Left lung (tissue), 14 donors: ENCODE measurements at regions of chr11 and their contacts with region 1.

Region 1: GRCh38 chr11:128039140-128040021 is 548.0 kb downstream of the ETS1 start:
- DNase-seq: peak in 2 of 4 donors; percentile 76 to 82
- ATAC-seq: peak; percentile 89
- H3K4me3 ChIP-seq: no peak overlapping the region
- H3K27ac ChIP-seq: peak overlapping the region in 1 of 2 donors; percentile 78
- H3K4me1 ChIP-seq: peaks cover 4 to 34% of the 10 kb centered on the region in 2 donors
- H3K27me3 ChIP-seq: no peaks in the 10 kb centered on the region
- CTCF ChIP-seq: no peak

Region 2: DNA sequence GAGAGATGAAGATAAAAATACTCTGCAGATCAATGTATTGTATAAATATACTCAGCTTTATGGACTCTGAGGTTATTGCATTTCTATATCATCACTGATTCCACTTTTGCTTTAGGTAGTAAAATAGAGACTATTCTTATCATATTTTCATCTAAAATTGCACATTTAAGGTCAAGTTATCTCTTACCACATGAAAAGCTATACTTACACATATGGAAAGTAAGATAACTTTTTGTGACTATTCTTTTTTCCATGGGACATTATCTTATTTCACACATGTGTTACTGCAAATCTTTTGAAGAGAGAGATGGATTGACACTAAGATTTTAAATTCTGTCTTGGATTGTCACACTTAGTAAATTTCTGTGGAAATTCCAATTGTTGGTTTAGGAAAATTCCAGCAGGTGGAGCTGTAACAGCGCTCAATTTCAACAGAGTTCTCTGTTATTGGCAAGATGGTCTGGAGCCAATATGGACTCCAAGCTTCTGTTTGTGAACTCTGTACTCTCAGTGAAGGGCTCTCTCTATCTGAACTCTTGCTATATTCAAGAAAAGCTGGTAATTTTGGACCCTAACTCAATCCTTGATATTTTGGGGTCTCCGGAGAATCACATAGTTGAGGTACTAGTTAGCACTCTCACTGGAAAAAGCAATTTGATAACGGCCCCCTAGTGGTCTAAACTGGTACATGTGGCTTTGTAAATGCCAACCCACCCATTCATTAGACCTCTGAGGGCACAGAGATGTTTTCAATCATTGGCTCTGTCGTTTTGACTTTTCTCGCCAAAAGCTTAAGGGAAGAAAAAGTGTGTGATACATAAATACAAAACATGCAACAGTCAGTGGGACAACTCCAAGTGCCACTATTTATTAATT is 118.3 kb after region 1 on chr11:
- intact Hi-C with region 1: loop called in 1 of 2 experiments (anchors 10 kb)
- DNase-seq: peak in 2 of 4 donors; percentile 56 to 73
- ATAC-seq: peak; percentile 97
- H3K4me3 ChIP-seq: no peak overlapping the region
- H3K27ac ChIP-seq: no peak overlapping the region
- H3K4me1 ChIP-seq: peaks cover 0 to 14% of the 10 kb centered on the region in 2 donors
- H3K27me3 ChIP-seq: no peaks in the 10 kb centered on the region
- CTCF ChIP-seq: peak; percentile 78 to 81

Region 3: GRCh38 chr11:128367573-128367972 is 328.2 kb after region 1 on chr11:
- intact Hi-C with region 1: no loop called
- DNase-seq: no peak
- ATAC-seq: no peak
- H3K4me3 ChIP-seq: no peak overlapping the region
- H3K27ac ChIP-seq: no peak overlapping the region
- H3K4me1 ChIP-seq: no peaks in the 10 kb centered on the region
- H3K27me3 ChIP-seq: no peaks in the 10 kb centered on the region
- CTCF ChIP-seq: no peak